Calu3 (cell line): ENCODE measurements at regions of chrX and their contacts with region 1.

Region 1: GRCh38 chrX:15815779-15816437 is 25.6 kb downstream of the ZRSR2 start:
- DNase-seq: peak; percentile 31
- H3K4me3 Mint-ChIP-seq: no peak overlapping the region
- H3K27ac Mint-ChIP-seq: no peak overlapping the region
- H3K4me1 Mint-ChIP-seq: no peaks in the 10 kb centered on the region
- H3K27me3 Mint-ChIP-seq: no peaks in the 10 kb centered on the region
- CTCF ChIP-seq: peak; percentile 28

Region 2: GRCh38 chrX:15631637-15632036 is 184.3 kb before region 1 on chrX:
- CTCF ChIA-PET with region 1: no interaction called
- intact Hi-C with region 1: no loop called
- DNase-seq: no peak
- H3K4me3 Mint-ChIP-seq: no peak overlapping the region
- H3K27ac Mint-ChIP-seq: no peak overlapping the region
- H3K4me1 Mint-ChIP-seq: no peaks in the 10 kb centered on the region
- H3K27me3 Mint-ChIP-seq: no peaks in the 10 kb centered on the region
- CTCF ChIP-seq: no peak

Region 3: DNA sequence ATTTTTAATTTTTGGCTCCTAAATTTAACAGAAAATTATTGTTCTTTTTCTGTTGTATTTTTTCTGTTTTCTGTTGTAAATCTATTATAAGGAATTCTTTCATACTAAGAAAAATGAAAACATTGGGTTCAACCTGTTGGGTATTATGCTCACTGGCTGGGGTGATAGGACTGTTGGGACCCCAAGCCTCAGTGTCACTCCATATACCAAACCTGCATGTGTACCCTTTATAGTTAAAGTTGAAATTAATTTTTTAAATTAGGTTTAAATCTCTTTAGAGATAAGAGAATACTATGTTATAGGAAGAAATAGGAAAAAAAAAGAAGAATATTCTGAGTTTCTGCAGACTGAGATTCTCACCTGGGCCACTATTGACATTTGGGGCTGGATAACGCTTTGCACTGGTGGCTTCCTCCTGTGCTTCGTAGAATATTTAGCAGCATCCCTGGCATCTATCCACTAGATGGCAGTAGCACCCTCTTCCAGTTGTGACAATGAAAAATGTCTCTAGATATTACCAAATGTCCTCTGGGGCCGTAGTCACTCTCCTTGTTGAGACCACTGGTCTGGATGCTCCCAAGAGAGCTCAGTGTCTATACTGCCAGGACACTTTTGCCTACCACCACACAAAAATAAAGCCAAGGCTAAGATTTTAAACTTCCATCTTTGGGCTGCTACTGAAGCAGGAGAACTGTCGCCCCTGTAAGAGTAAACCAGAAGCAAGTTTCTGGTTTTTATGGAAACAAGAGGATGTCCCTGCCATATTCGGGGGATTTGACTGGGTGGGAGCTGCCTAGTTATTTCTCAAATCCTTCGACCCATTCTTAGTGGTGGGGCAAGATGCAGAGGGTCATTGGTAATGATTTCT is 128.9 kb before region 1 on chrX:
- CTCF ChIA-PET with region 1: no interaction called
- intact Hi-C with region 1: loop called (anchors 10 kb)
- DNase-seq: peak; percentile 58
- H3K4me3 Mint-ChIP-seq: no peak overlapping the region
- H3K27ac Mint-ChIP-seq: no peak overlapping the region
- H3K4me1 Mint-ChIP-seq: no peaks in the 10 kb centered on the region
- H3K27me3 Mint-ChIP-seq: no peaks in the 10 kb centered on the region
- CTCF ChIP-seq: no peak